ENCODE measurements at regions of chr6 and their contacts with region 1.

Region 1: DNA sequence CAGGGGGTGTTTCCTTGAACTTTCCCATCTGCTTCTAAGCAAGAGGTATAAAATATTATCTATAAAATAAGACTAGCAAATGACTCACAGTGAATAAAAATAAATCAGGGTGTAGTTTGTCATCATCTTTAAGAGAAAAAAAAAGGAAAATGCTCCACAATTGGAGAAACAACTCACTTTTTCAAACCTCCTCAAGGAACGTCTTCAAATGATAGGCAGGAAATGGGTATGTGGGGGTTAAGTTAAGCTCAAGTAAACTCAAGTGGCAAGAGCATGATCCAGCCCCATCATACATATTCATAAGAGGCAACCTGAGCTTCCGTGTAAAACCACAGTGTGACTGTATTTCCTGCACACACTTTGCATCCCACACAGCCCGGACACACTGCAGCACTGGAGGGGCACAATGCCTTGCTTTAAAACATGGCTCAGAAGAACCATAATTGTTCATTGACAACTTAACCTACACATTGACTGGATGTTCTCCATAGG is 58.5 kb upstream of the CEP85L start:
- DNase-seq: peak; percentile 50 to 85 (median 81)
- H3K4me3 ChIP-seq: peak overlapping the region; percentile 90
- H3K4me3 Mint-ChIP-seq: peak overlapping the region; percentile 90 to 99 (median 99)
- H3K27ac ChIP-seq: peak overlapping the region; percentile 78
- H3K27ac Mint-ChIP-seq: peak overlapping the region; percentile 95 to 99 (median 97)
- H3K4me1 ChIP-seq: peaks cover 61% of the 10 kb centered on the region
- H3K4me1 Mint-ChIP-seq: peaks cover 71 to 76% (median 75%) of the 10 kb centered on the region in 3 donors
- H3K27me3 ChIP-seq: no peaks in the 10 kb centered on the region
- H3K27me3 Mint-ChIP-seq: no peaks in the 10 kb centered on the region

Region 2: GRCh38 chr6:118317581-118318563 is 392.0 kb before region 1 on chr6:
- CTCF ChIA-PET with region 1: no interaction called
- POLR2A ChIA-PET with region 1: no interaction called
- DNase-seq: no peak
- H3K4me3 ChIP-seq: no peak overlapping the region
- H3K4me3 Mint-ChIP-seq: no peak overlapping the region
- H3K27ac ChIP-seq: no peak overlapping the region
- H3K27ac Mint-ChIP-seq: no peak overlapping the region
- H3K4me1 ChIP-seq: no peaks in the 10 kb centered on the region
- H3K4me1 Mint-ChIP-seq: no peaks in the 10 kb centered on the region
- H3K27me3 ChIP-seq: no peaks in the 10 kb centered on the region
- H3K27me3 Mint-ChIP-seq: peaks cover 6 to 12% of the 10 kb centered on the region in 2 donors

Region 3: GRCh38 chr6:118558464-118559217 is 151.3 kb before region 1 on chr6:
- CTCF ChIA-PET with region 1: no interaction called
- POLR2A ChIA-PET with region 1: interaction called, 16 read pairs
- DNase-seq: peak in 3 of 5 donors; percentile 49 to 76 (median 58)
- H3K4me3 ChIP-seq: peak overlapping the region; percentile 8
- H3K4me3 Mint-ChIP-seq: peak overlapping the region; percentile 41 to 82 (median 78)
- H3K27ac ChIP-seq: peak overlapping the region; percentile 25
- H3K27ac Mint-ChIP-seq: peak overlapping the region; percentile 89 to 99 (median 94)
- H3K4me1 ChIP-seq: peaks cover 26% of the 10 kb centered on the region
- H3K4me1 Mint-ChIP-seq: peaks cover 36 to 54% (median 47%) of the 10 kb centered on the region in 3 donors
- H3K27me3 ChIP-seq: no peaks in the 10 kb centered on the region
- H3K27me3 Mint-ChIP-seq: no peaks in the 10 kb centered on the region

Region 4: DNA sequence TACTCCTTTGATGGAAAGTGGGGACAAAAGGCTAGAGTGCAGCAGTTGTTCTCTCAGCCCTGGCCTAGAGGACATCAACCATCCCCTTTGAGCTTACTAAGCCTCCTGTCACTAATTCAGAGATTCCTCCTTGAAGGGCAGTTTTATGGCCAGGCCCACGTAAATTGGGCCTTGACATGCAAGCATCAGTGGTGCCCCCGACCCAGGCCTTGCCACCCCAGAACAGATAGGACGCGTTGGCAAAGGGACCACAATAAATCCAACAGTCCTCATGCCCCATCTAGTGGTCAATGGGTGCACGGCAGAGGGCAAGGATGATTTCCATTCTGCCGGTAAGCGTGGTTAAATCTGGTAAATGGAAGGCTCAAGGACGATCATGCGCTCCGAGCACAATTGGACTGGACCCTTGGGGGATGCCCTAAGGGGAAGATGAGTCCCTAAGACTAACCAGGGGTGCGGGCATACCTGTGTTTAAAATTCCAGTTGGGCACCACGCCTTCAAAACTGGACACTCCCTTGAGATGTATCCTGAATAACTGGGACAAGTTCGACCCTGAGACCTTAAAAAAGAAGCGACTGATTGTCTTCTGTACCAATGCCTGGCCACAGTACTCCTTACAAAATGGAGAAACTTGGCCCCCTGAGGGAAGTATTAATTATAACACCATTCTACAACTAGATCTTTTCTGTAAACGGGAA is 91.1 kb before region 1 on chr6:
- CTCF ChIA-PET with region 1: no interaction called
- POLR2A ChIA-PET with region 1: no interaction called
- DNase-seq: peak; percentile 38 to 72 (median 47)
- H3K4me3 ChIP-seq: no peak overlapping the region
- H3K4me3 Mint-ChIP-seq: peak overlapping the region in 3 of 7 donors; percentile 25 to 46 (median 37)
- H3K27ac ChIP-seq: no peak overlapping the region
- H3K27ac Mint-ChIP-seq: peak overlapping the region in 6 of 8 donors; percentile 75 to 87 (median 82)
- H3K4me1 ChIP-seq: peaks cover 14% of the 10 kb centered on the region
- H3K4me1 Mint-ChIP-seq: peaks cover 45 to 86% (median 77%) of the 10 kb centered on the region in 3 donors
- H3K27me3 ChIP-seq: no peaks in the 10 kb centered on the region
- H3K27me3 Mint-ChIP-seq: no peaks in the 10 kb centered on the region

Region 5: GRCh38 chr6:118651282-118652050 is 58.4 kb before region 1 on chr6 and contains the start of gene CEP85L:
- CTCF ChIA-PET with region 1: interaction called, 5 read pairs
- POLR2A ChIA-PET with region 1: interaction called, 28 read pairs
- DNase-seq: peak; percentile 87 to 94 (median 89)
- H3K4me3 ChIP-seq: peak within 1 kb of the TSS; percentile 75
- H3K4me3 Mint-ChIP-seq: peak within 1 kb of the TSS; percentile 94 to 98 (median 97)
- H3K27ac ChIP-seq: peak within 1 kb of the TSS; percentile 82
- H3K27ac Mint-ChIP-seq: peak within 1 kb of the TSS; percentile 87 to 98 (median 97)
- H3K4me1 ChIP-seq: peaks cover 34% of the 10 kb centered on the region
- H3K4me1 Mint-ChIP-seq: peaks cover 45 to 56% (median 54%) of the 10 kb centered on the region in 3 donors
- H3K27me3 ChIP-seq: no peaks in the 10 kb centered on the region
- H3K27me3 Mint-ChIP-seq: peaks cover 0 to 2% of the 10 kb centered on the region in 2 donors
- total RNA-seq, gene CEP85L: 28.4 to 29.1 TPM

Region 6: DNA sequence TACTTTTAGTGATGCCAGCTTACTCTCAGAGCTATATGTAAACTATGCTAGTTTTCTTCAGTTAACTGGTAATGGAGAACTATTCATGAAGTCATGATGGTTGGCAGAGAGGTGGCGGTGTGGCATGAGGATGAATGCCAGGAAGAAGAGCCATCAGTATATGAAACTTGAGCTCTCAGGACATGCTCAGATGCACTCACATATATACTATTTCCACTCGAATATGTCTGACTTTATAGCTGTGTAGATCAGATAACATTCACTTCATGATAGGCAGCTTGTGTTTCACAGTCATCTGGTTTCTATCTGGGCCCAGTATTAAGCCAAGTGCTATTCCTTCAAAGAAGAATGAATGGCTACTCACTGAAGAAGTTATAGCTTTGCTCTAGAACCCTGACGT is 12.4 kb before region 1 on chr6:
- CTCF ChIA-PET with region 1: interaction called, 16 read pairs
- POLR2A ChIA-PET with region 1: interaction called, 3 read pairs
- DNase-seq: no peak
- H3K4me3 ChIP-seq: no peak overlapping the region
- H3K4me3 Mint-ChIP-seq: peak overlapping the region in 1 of 7 donors; percentile 3
- H3K27ac ChIP-seq: no peak overlapping the region
- H3K27ac Mint-ChIP-seq: peak overlapping the region in 3 of 8 donors; percentile 28 to 47 (median 35)
- H3K4me1 ChIP-seq: peaks cover 32% of the 10 kb centered on the region
- H3K4me1 Mint-ChIP-seq: peaks cover 62 to 92% (median 92%) of the 10 kb centered on the region in 3 donors
- H3K27me3 ChIP-seq: no peaks in the 10 kb centered on the region
- H3K27me3 Mint-ChIP-seq: no peaks in the 10 kb centered on the region

Region 7: GRCh38 chr6:118761645-118762044 is 51.7 kb after region 1 on chr6:
- CTCF ChIA-PET with region 1: no interaction called
- POLR2A ChIA-PET with region 1: interaction called, 11 read pairs
- DNase-seq: no peak
- H3K4me3 ChIP-seq: no peak overlapping the region
- H3K4me3 Mint-ChIP-seq: no peak overlapping the region
- H3K27ac ChIP-seq: no peak overlapping the region
- H3K27ac Mint-ChIP-seq: no peak overlapping the region
- H3K4me1 ChIP-seq: peaks cover under 1% of the 10 kb centered on the region
- H3K4me1 Mint-ChIP-seq: peaks cover 1 to 3% (median 2%) of the 10 kb centered on the region in 3 donors
- H3K27me3 ChIP-seq: no peaks in the 10 kb centered on the region
- H3K27me3 Mint-ChIP-seq: peaks cover 0 to 7% of the 10 kb centered on the region in 2 donors

Region 8: DNA sequence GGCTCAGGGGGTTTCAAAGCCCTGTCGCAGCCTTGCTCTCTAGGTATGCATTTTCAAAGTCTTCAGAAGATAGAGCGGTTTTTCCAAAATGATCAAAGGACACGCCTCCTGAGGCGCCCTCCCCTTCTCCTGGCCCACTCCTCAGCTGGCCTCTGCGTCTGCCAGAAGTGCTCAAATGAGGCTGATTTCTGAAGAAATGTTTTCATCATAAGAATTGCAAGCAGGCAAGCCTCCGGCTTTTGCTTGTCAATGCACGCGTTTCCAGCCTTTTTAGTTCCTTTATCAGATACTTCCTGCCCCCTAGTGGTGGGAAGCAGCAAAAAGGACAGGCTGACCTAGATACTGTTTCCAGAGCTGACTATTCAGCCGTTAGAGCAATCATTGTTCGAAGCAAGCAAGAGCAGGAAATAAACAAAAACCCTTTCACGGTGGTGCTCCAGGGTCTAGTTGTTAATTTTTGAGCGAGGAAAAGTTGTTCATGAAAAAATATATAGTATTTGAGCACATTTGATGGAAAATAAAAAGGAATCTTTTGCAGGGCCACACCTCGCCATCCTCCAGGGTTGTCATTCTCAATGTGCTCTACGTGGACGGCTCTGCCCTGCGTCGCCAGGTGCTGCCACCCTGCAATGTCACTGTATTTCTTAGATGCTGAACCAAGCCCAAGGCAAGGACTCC is 90.6 kb after region 1 on chr6:
- CTCF ChIA-PET with region 1: interaction called, 10 read pairs
- POLR2A ChIA-PET with region 1: interaction called, 4 read pairs
- DNase-seq: peak; percentile 64 to 87 (median 81)
- H3K4me3 ChIP-seq: peak overlapping the region; percentile 22
- H3K4me3 Mint-ChIP-seq: peak overlapping the region; percentile 4 to 71 (median 55)
- H3K27ac ChIP-seq: no peak overlapping the region
- H3K27ac Mint-ChIP-seq: peak overlapping the region; percentile 30 to 96 (median 90)
- H3K4me1 ChIP-seq: peaks cover 27% of the 10 kb centered on the region
- H3K4me1 Mint-ChIP-seq: peaks cover 35 to 47% (median 41%) of the 10 kb centered on the region in 3 donors
- H3K27me3 ChIP-seq: no peaks in the 10 kb centered on the region
- H3K27me3 Mint-ChIP-seq: no peaks in the 10 kb centered on the region

Region 9: DNA sequence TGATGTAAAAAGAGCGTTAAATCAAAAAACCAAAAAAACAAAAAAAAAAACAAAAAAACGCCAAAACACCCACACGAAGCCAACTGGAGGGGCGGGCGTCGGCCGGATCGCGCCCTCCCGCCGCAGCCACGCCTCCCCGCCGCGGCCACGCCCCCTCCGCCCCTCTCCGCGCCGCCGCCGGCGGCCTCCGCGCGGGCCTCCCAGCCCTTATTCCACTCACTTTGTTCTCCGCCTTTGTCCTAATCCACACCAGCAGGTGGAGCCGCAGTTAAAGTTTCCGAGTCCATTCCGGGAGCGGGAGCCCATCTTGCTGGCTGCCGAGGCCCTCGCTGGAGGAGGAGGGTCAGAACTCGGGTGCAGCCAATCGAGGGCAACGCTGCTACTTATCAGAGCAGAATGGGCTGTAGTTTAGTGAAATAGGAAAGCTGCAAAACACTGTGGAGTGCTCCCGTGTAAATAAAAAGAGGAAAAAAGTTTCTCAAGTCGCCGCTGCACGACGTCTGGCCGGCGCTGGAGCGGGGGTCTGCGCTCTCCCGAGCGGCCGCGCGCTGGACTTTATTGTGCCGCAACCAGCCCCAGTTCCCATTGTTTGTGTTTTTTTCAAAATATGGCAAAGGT is 184.0 kb after region 1 on chr6 and contains the start of gene ASF1A:
- CTCF ChIA-PET with region 1: interaction called, 9 read pairs
- POLR2A ChIA-PET with region 1: interaction called, 19 read pairs
- DNase-seq: peak; percentile 92 to 97 (median 96)
- H3K4me3 ChIP-seq: peak within 1 kb of the TSS; percentile 92
- H3K4me3 Mint-ChIP-seq: peak within 1 kb of the TSS; percentile 89 to 99 (median 94)
- H3K27ac ChIP-seq: peak within 1 kb of the TSS; percentile 87
- H3K27ac Mint-ChIP-seq: peak within 1 kb of the TSS; percentile 96 to 99 (median 98)
- H3K4me1 ChIP-seq: peaks cover 63% of the 10 kb centered on the region
- H3K4me1 Mint-ChIP-seq: peaks cover 54 to 73% (median 69%) of the 10 kb centered on the region in 3 donors
- H3K27me3 ChIP-seq: no peaks in the 10 kb centered on the region
- H3K27me3 Mint-ChIP-seq: peaks cover 0 to 3% of the 10 kb centered on the region in 2 donors
- total RNA-seq, gene ASF1A: 42.6 to 46.1 TPM

Region 10: DNA sequence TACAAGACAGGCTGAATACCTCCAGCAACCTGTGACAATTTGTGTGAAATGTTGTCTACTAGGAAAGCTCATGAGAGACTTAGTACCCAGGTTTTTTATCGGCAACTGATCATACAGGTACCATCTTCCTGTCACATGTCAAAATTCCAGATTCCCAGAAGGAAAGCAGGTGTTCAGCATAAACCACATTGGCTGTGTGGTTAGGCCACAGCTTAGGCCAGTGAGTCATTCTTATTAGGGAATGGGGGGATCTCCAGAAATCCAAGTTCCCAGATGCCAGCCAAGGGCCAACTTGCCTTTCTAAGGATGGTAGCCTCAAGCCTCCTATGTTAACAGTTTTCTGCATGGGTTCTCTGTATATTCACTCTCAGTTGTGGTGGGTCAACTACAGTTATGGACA is 302.6 kb after region 1 on chr6:
- CTCF ChIA-PET with region 1: no interaction called
- POLR2A ChIA-PET with region 1: no interaction called
- DNase-seq: no peak
- H3K4me3 ChIP-seq: no peak overlapping the region
- H3K4me3 Mint-ChIP-seq: no peak overlapping the region
- H3K27ac ChIP-seq: no peak overlapping the region
- H3K27ac Mint-ChIP-seq: no peak overlapping the region
- H3K4me1 ChIP-seq: no peaks in the 10 kb centered on the region
- H3K4me1 Mint-ChIP-seq: no peaks in the 10 kb centered on the region
- H3K27me3 ChIP-seq: no peaks in the 10 kb centered on the region
- H3K27me3 Mint-ChIP-seq: peaks cover 0 to 2% of the 10 kb centered on the region in 2 donors

Measured in CD8-positive, alpha-beta memory T cell (primary cell).